WTC11 (cell line): ENCODE measurements at regions of chr1 and their contacts with region 1.

Region 1: GRCh38 chr1:31705080-31705866 is 1.5 kb upstream of the COL16A1 start:
- DNase-seq: peak; percentile 75
- ATAC-seq: peak; percentile 40
- H3K4me3 Mint-ChIP-seq: peak overlapping the region; percentile 76
- H3K27ac Mint-ChIP-seq: peak overlapping the region; percentile 91
- H3K4me1 Mint-ChIP-seq: peaks cover 42% of the 10 kb centered on the region
- H3K27me3 Mint-ChIP-seq: peaks cover 6% of the 10 kb centered on the region
- CTCF ChIP-seq: no peak

Region 2: DNA sequence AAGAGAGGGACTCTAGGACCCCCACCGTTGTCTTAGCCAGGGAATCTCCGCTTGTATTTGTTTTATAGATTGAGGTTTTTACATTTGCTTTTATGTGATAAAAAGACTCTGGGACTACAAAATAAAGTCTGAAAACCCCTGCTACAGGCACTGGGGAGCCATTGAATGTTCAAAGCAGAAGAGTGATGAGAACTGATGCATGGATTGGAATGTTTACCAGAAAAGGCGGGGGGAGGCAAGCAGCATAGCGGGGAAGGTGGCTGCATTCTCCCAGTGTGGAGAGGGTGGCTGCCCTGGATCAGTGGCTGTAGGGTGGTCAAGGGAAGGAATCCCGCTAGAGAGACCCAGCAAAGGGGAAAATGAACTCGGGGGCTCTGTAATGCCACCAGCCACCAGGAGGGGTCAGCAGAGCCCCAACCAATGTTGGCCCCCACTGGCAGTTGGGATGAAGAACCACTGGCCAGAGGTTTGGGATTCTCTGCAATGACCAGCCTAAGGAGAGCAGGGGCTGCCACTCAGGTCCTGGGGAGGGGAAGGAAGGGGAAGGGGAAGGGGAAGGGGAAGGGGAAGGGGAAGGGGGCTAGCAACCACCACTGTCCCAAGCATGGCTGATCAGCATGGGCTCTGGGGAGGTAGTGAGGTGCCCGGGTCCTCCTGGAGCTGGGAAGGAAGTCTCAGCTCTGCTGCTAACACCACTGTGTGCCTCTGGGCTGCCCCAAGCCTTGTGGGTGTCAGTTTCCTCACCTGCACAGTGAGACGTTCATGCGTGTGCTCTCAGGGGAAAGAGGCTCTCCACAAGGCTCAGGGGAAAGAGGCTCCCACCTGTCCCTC is 41.4 kb before region 1 on chr1:
- CTCF ChIA-PET with region 1: interaction called, 43 read pairs
- POLR2A ChIA-PET with region 1: no interaction called
- DNase-seq: peak; percentile 89
- ATAC-seq: peak; percentile 83
- H3K4me3 Mint-ChIP-seq: no peak overlapping the region
- H3K27ac Mint-ChIP-seq: no peak overlapping the region
- H3K4me1 Mint-ChIP-seq: peaks cover 3% of the 10 kb centered on the region
- H3K27me3 Mint-ChIP-seq: no peaks in the 10 kb centered on the region
- CTCF ChIP-seq: peak; percentile 91

Region 3: DNA sequence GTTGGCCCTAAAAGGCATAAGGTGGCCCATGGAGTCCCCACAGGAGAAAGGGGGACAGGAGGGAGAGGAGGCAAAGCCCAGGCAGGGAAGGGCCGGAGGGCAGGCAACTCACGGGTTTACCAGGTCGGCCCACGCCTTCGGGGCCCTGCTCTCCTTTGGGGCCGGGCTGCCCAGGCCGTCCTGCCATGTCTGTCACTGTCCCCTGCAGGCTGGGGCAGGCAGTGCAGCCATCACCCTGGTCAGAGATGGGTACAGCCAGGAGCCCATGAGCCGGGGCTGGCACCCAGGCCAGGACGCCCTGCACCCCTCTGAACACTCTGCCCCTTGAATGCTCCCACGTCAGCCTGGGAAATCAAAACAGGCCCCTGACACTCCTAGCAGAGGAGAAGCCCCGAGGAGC is 21.3 kb before region 1 on chr1:
- CTCF ChIA-PET with region 1: interaction called, 16 read pairs
- POLR2A ChIA-PET with region 1: interaction called, 3 read pairs
- DNase-seq: peak; percentile 81
- ATAC-seq: peak; percentile 93
- H3K4me3 Mint-ChIP-seq: no peak overlapping the region
- H3K27ac Mint-ChIP-seq: no peak overlapping the region
- H3K4me1 Mint-ChIP-seq: no peaks in the 10 kb centered on the region
- H3K27me3 Mint-ChIP-seq: no peaks in the 10 kb centered on the region; the same call in 1 of the 2 replicates
- CTCF ChIP-seq: peak; percentile 54

Region 4: DNA sequence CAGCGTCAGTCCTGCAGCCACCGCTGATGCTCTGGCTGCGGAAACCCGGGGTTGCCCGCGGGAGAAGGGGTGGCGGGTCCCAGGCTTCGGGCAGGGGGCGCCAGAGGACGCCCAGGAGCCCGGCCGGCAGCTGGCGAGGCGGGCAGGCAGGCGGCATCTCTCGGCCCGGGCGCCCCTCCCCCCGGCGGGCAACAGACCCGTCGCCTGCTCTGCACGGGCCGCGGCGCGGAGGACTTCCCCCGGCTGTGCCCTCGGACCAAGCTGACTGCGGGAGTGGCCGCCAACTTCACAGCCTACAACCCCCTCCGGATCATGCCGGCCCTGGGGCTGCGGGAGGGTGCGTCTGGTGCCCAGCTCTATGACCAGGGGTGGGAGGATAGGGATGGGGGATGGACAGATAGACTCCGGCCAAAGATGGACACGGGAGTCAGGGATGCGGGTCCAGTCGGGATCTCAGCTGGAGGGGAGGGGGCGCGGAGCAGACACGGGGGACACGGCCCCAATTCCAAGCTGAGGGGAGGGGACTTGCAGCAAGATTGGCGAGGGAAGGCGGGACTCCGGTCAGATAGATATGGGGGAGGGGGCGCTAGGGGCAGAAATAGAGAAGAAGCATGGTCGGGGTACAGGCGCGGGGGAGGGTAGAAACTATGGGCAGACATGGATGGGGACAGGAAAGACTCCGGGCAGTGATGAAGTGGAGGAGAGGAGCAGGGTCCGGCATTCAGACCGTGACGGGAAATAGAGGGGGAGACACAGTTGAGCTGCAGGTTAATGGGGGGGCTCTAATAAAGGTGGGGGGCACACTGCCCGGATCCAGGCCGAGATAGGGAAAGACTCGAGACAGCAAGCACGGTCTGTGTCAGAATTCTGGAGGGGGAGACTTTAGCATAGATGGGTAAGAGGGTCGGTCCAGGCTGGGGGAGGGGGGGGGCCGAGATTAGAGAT is 57.7 kb after region 1 on chr1:
- CTCF ChIA-PET with region 1: interaction called, 21 read pairs
- POLR2A ChIA-PET with region 1: no interaction called
- DNase-seq: peak; percentile 88
- ATAC-seq: peak; percentile 36
- H3K4me3 Mint-ChIP-seq: peak overlapping the region; percentile 82
- H3K27ac Mint-ChIP-seq: no peak overlapping the region
- H3K4me1 Mint-ChIP-seq: peaks cover 63% of the 10 kb centered on the region
- H3K27me3 Mint-ChIP-seq: peaks cover 20% of the 10 kb centered on the region
- CTCF ChIP-seq: peak; percentile 82